ENCODE measurements at regions of chr15 and their contacts with region 1.

Region 1: DNA sequence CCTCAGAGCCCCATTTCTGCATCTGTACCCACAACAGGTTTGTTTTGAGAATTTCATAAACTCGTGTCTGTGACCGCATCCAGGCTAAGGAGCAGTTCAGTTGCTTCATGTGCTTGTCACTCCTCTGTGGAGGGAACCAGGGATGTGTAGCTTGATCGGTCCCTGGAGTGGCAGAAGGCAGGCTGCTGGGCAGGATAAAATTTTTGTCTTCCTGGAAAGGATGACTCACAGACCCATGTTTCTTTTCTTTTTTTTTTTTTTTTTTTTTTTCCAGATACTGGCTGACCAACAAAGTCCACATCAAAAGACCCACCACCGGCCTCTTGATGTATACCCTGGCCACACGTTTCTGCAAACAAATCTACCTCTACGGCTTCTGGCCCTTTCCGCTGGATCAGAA is 70.1 kb downstream of the ST8SIA2 start:
- DNase-seq: no peak
- H3K4me3 ChIP-seq: no peak overlapping the region
- H3K27ac ChIP-seq: no peak overlapping the region
- H3K4me1 ChIP-seq: no peaks in the 10 kb centered on the region
- CTCF ChIP-seq: no peak

Region 2: DNA sequence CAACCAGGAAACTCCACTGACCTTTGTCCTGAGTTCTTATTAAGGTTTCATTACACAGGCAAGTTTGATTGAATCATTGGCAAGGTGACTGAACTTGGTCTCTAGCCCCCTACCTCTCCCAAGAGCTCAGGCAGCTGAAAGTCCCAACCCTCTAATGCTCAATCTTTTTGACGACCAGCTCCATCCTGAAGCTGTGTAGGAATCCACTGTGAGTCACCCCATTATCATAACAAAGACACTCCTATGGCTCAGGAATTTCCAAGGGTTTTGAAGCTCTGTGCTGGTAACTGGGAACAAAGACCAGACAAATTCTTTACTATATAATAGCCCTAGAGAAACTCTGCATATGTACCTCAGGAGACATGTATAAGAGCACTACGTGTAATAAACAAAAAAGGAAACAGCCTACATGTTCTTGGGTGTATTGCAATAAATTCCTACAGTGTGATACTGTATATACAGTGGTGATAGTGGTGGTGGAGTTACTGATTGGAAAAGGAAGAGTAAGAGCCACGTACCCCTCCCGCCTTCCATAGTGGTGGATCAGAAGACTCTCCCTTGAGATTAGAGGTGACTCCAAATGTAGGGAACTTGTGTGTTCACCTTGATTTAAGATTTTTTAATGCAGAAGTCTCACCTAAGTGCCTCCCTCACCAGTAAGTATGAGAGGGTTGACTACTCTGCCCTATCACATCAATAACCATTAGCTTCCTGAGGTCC is 46.5 kb after region 1 on chr15:
- CTCF ChIA-PET with region 1: interaction called, 15 read pairs
- POLR2A ChIA-PET with region 1: no interaction called
- intact Hi-C with region 1: no loop called
- DNase-seq: no peak
- H3K4me3 ChIP-seq: no peak overlapping the region
- H3K27ac ChIP-seq: no peak overlapping the region
- H3K4me1 ChIP-seq: no peaks in the 10 kb centered on the region
- CTCF ChIP-seq: no peak